Body of pancreas (tissue), 4 donors: ENCODE measurements at regions of chr10 and their contacts with region 1.

Region 1: GRCh38 chr10:25080880-25081581 is 64.6 kb downstream of the THNSL1 start:
- DNase-seq: peak; percentile 88 to 92 (median 91)
- ATAC-seq: peak; percentile 88
- H3K4me3 ChIP-seq: no peak overlapping the region
- H3K27ac ChIP-seq: peak overlapping the region in 3 of 4 donors; percentile 29 to 85 (median 60)
- H3K4me1 ChIP-seq: peaks cover 32% of the 10 kb centered on the region
- H3K27me3 ChIP-seq: no peaks in the 10 kb centered on the region
- CTCF ChIP-seq: peak; percentile 65 to 98 (median 95)
- POLR2A ChIP-seq: no peak

Region 2: GRCh38 chr10:24642622-24643417 is 438.2 kb before region 1 on chr10:
- intact Hi-C with region 1: loop called (anchors 5 kb)
- DNase-seq: peak in 3 of 4 donors; percentile 16 to 57 (median 22)
- ATAC-seq: peak; percentile 99
- H3K4me3 ChIP-seq: no peak overlapping the region
- H3K27ac ChIP-seq: peak overlapping the region in 2 of 4 donors; percentile 12 to 46
- H3K4me1 ChIP-seq: peaks cover 10% of the 10 kb centered on the region
- H3K27me3 ChIP-seq: no peaks in the 10 kb centered on the region
- CTCF ChIP-seq: peak; percentile 60 to 96 (median 89)
- POLR2A ChIP-seq: no peak

Region 3: GRCh38 chr10:25758041-25758457 is 677.0 kb after region 1 on chr10:
- intact Hi-C with region 1: no loop called
- DNase-seq: peak in 3 of 4 donors; percentile 21 to 52 (median 34)
- ATAC-seq: peak; percentile 63
- H3K4me3 ChIP-seq: no peak overlapping the region
- H3K27ac ChIP-seq: no peak overlapping the region
- H3K4me1 ChIP-seq: no peaks in the 10 kb centered on the region
- H3K27me3 ChIP-seq: no peaks in the 10 kb centered on the region
- CTCF ChIP-seq: peak in 6 of 7 experiments; percentile 43 to 62 (median 56)
- POLR2A ChIP-seq: no peak